Activated T-helper 1 cell treated with anti-CD3 and anti-CD28 coated beads, Interleukin-12 subunit alpha, Interleukin-12 subunit beta, Interleukin-2, Interleukin-4 antibody, amounts not matched to agents 30 ng/mL and 10 ng/mL and 1 ng/mL, durations not matched to agents 14 hours and 24 hours and 36 hours (primary cell): ENCODE measurements at regions of chr10 and their contacts with region 1.

Region 1: DNA sequence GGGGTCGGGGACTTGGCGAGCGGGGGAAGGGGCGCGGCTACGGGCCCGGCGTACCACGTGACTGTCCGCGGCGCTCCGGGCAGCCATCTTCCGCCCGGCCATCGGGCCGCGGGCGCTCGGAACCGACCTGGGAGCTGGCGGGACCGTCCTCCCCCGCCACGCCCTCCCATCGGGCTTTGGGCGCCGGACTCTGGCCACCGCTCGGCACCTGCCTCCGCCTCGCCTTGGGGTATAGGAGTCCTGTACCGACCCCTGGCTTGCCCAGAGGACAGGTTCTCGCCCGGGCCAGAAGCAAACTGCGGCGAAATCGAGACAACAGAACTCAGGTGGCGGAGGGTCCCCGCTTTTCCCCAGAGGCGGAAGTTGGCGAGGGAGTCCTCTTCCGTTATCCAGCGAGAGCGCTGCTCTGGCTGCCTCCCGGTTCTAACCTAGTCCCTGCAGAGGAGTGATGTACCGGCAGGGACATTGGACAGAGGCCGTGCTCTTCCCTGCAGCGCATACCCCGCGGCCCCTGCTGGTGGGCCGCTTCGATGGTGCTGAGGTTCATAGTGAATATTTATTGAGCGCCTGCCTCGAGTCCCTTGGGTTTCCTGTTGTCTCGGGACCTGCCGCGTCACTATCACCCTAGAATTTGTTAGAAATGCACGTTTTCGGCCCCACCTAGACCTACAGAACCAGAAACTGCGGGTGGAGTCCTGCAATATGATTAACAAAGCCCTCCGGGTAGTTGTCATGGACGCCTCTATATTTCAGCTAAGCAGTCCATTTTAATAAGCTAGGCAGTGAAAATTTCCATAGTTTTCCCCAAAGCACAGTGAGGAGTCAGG is 1.3 kb upstream of the SGMS1 start:
- DNase-seq: no peak
- H3K4me3 Mint-ChIP-seq: peak overlapping the region; percentile 89
- H3K27ac Mint-ChIP-seq: peak overlapping the region; percentile 88
- H3K4me1 Mint-ChIP-seq: peaks cover 43% of the 10 kb centered on the region
- H3K27me3 Mint-ChIP-seq: no peaks in the 10 kb centered on the region

Region 2: DNA sequence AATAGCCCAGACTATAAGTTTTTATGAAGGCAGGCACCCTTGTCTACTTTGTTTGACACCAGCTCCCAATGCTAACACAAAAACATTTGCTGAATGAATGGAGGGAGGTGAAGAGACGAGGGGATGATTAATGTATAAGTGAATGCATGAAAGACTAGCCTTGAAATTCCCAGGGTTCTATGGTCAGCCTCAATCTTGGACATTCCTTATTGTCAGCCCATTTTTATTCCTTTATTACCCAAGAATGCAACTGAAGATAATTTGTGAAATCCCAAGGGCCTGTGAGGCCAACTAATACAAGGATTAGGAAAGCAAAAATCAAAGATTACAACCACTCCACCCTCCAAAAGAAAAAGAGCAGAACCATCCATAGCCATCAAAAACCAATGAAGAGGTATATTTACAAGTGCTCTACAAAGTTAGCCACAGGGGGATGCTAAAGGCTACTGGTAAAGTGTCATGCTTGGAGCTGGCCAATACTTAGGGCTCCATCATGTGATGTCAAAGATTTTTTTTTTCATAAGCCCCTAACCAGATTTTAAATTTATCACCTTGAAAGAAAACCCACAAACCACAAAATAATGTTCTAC is 333.7 kb before region 1 on chr10:
- intact Hi-C with region 1: loop called (anchors 10 kb)
- DNase-seq: no peak
- H3K4me3 Mint-ChIP-seq: no peak overlapping the region
- H3K27ac Mint-ChIP-seq: no peak overlapping the region
- H3K4me1 Mint-ChIP-seq: no peaks in the 10 kb centered on the region
- H3K27me3 Mint-ChIP-seq: peaks cover 13% of the 10 kb centered on the region

Region 3: GRCh38 chr10:50367732-50368131 is 257.3 kb before region 1 on chr10:
- intact Hi-C with region 1: loop called (anchors 2 kb)
- DNase-seq: no peak
- H3K4me3 Mint-ChIP-seq: no peak overlapping the region
- H3K27ac Mint-ChIP-seq: no peak overlapping the region
- H3K4me1 Mint-ChIP-seq: peaks cover 8% of the 10 kb centered on the region
- H3K27me3 Mint-ChIP-seq: no peaks in the 10 kb centered on the region

Region 4: DNA sequence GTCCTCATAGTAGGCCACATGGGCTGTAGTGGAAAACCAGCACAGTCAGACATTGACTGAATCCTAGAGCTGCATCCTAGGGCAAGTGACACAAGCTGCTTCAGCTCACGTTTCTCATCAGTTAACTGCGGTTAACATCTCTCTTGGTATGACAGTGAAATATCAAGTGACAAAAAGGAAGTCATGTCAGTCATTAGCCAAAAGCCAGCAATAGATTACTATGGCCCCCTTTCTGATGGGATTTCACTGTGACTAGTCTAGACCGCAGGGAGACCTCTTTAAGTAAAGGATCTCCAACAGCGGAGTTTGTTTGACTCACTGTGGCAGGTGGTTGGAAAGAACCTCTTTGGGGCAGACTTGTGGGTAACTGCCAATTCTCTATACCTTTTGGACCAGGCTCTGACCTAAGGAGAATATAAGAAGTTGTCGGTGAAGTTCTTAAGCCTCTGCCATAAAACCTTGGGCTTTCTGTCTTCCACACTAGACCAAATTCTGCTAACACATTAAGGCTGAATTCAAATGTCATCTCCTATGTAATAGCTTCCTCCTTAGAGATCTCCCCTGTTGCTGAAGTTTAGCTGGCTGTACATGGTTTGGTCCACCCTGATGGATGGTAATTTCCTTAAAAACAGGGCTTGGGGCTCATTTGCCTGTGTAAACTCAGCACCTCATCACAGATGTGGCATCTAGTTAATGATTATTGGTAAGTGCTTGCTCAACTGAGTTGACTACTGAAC is 116.6 kb before region 1 on chr10:
- intact Hi-C with region 1: loop called (anchors 1 kb)
- DNase-seq: peak; percentile 37
- H3K4me3 Mint-ChIP-seq: no peak overlapping the region
- H3K27ac Mint-ChIP-seq: no peak overlapping the region
- H3K4me1 Mint-ChIP-seq: peaks cover 79% of the 10 kb centered on the region
- H3K27me3 Mint-ChIP-seq: no peaks in the 10 kb centered on the region

Region 5: GRCh38 chr10:50527442-50528043 is 97.5 kb before region 1 on chr10:
- intact Hi-C with region 1: no loop called
- DNase-seq: no peak
- H3K4me3 Mint-ChIP-seq: no peak overlapping the region
- H3K27ac Mint-ChIP-seq: no peak overlapping the region
- H3K4me1 Mint-ChIP-seq: peaks cover 25% of the 10 kb centered on the region
- H3K27me3 Mint-ChIP-seq: no peaks in the 10 kb centered on the region

Region 6: GRCh38 chr10:50561816-50562215 is 63.3 kb before region 1 on chr10:
- intact Hi-C with region 1: loop called (anchors 5 kb)
- DNase-seq: no peak
- H3K4me3 Mint-ChIP-seq: no peak overlapping the region
- H3K27ac Mint-ChIP-seq: no peak overlapping the region
- H3K4me1 Mint-ChIP-seq: no peaks in the 10 kb centered on the region
- H3K27me3 Mint-ChIP-seq: no peaks in the 10 kb centered on the region

Region 7: GRCh38 chr10:50653142-50653541 is 28.1 kb after region 1 on chr10:
- intact Hi-C with region 1: loop called (anchors 2 kb)
- DNase-seq: no peak
- H3K4me3 Mint-ChIP-seq: no peak overlapping the region
- H3K27ac Mint-ChIP-seq: no peak overlapping the region
- H3K4me1 Mint-ChIP-seq: peaks cover 22% of the 10 kb centered on the region
- H3K27me3 Mint-ChIP-seq: peaks cover 8% of the 10 kb centered on the region

Region 8: DNA sequence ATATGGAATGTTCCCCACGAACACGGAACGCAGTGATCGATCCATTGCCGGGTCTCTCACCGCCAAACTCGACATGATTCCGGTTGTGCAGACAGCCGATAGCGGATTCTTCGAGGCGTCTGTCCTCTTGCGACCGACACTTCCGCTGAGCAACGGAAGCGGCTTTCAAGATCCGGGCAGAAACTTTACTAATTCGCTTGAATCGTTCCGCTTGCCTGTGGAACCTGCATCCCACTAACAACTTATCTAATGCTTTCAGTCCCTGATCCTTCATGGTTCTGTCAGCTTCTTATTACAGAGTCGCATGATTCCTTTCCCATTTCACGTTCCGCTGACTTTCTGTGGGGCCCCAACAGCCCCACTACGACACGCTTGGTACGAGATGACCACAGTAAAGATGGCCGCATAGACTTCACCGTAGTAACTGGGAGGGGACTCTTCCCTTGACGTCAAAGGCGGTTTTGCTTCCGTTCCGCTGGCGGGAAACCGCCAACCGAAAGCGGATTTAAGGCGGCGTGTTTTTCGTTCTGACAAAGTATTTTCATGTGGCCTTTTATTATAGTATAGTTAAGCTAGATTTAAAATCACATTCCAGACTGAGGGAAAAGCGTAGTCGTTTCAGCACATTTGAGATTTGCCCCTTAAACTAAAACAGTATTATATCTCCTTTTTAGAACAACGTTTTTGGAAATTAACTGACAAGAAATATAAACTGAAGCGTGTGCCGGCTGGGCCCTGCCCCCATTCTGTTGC is 1074.6 kb after region 1 on chr10 and contains the start of gene CSTF2T:
- intact Hi-C with region 1: loop called (anchors 5 kb)
- DNase-seq: peak; percentile 91
- H3K4me3 Mint-ChIP-seq: peak within 1 kb of the TSS; percentile 98
- H3K27ac Mint-ChIP-seq: peak within 1 kb of the TSS; percentile 100
- H3K4me1 Mint-ChIP-seq: peaks cover 68% of the 10 kb centered on the region
- H3K27me3 Mint-ChIP-seq: no peaks in the 10 kb centered on the region
- total RNA-seq, gene CSTF2T: 42.3 and 44.8 TPM in 2 replicates